Transverse colon (tissue), 4 donors: ENCODE measurements at regions of chr1 and their contacts with region 1.

Region 1: GRCh38 chr1:245614476-245614875 is 459.7 kb downstream of the KIF26B start:
- DNase-seq: no peak
- H3K4me3 ChIP-seq: no peak overlapping the region
- H3K27ac ChIP-seq: no peak overlapping the region
- H3K4me1 ChIP-seq: peaks cover 0 to 5% (median 0%) of the 10 kb centered on the region in 4 donors
- H3K27me3 ChIP-seq: peaks cover 4% of the 10 kb centered on the region
- CTCF ChIP-seq: no peak
- EP300 ChIP-seq: no peak
- POLR2A ChIP-seq: no peak

Region 2: GRCh38 chr1:245337829-245338484 is 276.5 kb before region 1 on chr1:
- in situ Hi-C with region 1: no loop called
- intact Hi-C with region 1: no loop called
- DNase-seq: no peak
- H3K4me3 ChIP-seq: no peak overlapping the region
- H3K27ac ChIP-seq: no peak overlapping the region
- H3K4me1 ChIP-seq: no peaks in the 10 kb centered on the region
- H3K27me3 ChIP-seq: no peaks in the 10 kb centered on the region
- CTCF ChIP-seq: no peak
- EP300 ChIP-seq: no peak
- POLR2A ChIP-seq: no peak

Region 3: GRCh38 chr1:245673881-245674414 is 59.5 kb after region 1 on chr1:
- in situ Hi-C with region 1: loop called in 1 of 4 experiments (anchors 10 kb)
- intact Hi-C with region 1: no loop called
- DNase-seq: no peak
- H3K4me3 ChIP-seq: no peak overlapping the region
- H3K27ac ChIP-seq: no peak overlapping the region
- H3K4me1 ChIP-seq: no peaks in the 10 kb centered on the region
- H3K27me3 ChIP-seq: no peaks in the 10 kb centered on the region
- CTCF ChIP-seq: no peak
- EP300 ChIP-seq: no peak
- POLR2A ChIP-seq: no peak